PC-3 (cell line): ENCODE measurements at regions of chr16 and their contacts with region 1.

Region 1: DNA sequence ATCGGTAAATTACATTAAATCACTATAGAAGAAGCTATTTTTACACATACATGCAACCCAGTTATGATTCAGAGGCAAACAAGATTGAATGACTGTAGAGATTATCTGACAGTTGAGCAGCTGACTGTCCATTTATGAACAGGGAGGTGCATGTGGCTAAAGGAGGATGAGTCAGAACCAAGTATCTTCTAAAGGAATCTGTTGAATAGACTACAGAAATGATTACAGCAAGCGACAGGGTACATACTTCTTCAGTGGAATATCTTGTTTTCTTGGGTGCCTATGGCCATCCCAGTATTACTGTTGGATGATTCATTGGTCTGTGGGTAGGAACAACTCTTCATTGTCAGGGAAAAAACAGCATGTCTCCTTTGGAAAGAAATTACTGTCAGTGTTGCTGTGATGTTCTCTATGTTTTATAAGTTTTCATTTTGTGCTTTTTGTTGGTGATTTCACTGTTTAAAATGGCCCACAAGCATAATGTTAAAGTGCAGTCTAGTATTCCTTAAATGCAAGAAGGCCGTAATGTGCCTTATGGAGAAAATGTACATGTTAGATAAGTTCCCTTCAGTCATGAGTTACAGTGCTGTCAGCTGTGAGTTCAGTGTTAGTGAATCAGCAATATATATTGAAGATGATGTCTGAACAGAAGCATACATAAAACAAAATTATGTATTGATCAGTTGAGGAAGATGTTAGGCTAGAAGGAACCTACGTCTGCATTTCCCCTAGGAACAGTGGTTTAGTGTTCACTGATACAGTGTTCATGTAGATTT is 27.0 kb downstream of the CBFB start:
- DNase-seq: peak; percentile 89
- ATAC-seq: peak; percentile 97
- H3K4me3 ChIP-seq: peak overlapping the region; percentile 3; the same call in 1 of the 2 replicates
- H3K27ac ChIP-seq: peak overlapping the region; percentile 61
- H3K4me1 ChIP-seq: peaks cover 23% of the 10 kb centered on the region
- H3K27me3 ChIP-seq: no peaks in the 10 kb centered on the region
- CTCF ChIP-seq: no peak

Region 2: GRCh38 chr16:67028555-67029248 is 27.2 kb before region 1 on chr16 and contains the start of gene CBFB:
- CTCF ChIA-PET with region 1: interaction called, 10 read pairs
- POLR2A ChIA-PET with region 1: no interaction called
- intact Hi-C with region 1: no loop called
- DNase-seq: peak; percentile 85
- ATAC-seq: peak; percentile 83
- H3K4me3 ChIP-seq: peak within 1 kb of the TSS; percentile 96
- H3K27ac ChIP-seq: peak within 1 kb of the TSS; percentile 64
- H3K4me1 ChIP-seq: peaks cover 8% of the 10 kb centered on the region
- H3K27me3 ChIP-seq: no peaks in the 10 kb centered on the region
- CTCF ChIP-seq: 0 out of 2 replicates have a peak, but pooled peaks have one; percentile 16
- total RNA-seq, gene CBFB: 50.6 and 103 TPM in 2 replicates

Region 3: DNA sequence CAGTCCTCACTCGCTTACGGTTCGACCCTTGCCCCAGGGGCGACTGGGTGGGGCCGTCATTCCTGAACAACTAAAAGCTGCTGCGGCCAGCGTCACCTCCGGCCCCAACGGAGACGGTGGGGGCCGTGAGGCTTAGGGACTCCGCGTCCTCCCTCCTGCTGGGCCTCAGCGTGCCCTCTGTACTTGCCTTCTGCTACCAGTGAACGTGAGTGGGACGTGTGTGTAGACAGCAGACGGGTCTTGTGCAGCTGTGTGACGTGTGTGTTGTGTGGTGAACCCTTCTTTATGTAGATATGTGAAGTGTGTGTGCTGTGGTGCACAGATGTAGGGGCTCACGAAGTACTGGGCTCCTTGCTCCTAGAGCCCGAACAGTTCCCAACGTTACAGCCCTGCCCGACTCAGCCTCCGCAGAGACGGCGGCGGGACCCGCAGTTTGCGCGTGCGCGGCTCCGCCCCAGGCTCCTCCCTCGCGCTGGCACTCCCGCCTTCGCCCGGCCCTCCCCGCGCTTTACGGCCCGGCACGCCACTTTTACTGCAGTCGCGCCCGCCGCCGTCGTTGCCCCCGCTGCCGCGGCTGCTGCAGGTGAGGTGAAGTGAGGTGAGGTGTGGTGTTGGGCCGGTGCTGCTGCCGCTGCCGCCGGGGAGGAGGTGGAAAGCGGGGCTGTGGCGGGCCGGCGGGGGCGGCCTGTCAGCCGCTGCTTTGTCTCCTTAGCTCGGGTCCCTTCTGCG is 53.7 kb after region 1 on chr16 and contains the start of gene PHAF1:
- CTCF ChIA-PET with region 1: no interaction called
- POLR2A ChIA-PET with region 1: no interaction called
- intact Hi-C with region 1: no loop called
- DNase-seq: peak; percentile 86
- ATAC-seq: peak; percentile 85
- H3K4me3 ChIP-seq: peak within 1 kb of the TSS; percentile 95
- H3K27ac ChIP-seq: peak within 1 kb of the TSS; percentile 14; the same call in 1 of the 2 replicates
- H3K4me1 ChIP-seq: peaks cover 30% of the 10 kb centered on the region
- H3K27me3 ChIP-seq: no peaks in the 10 kb centered on the region
- CTCF ChIP-seq: no peak
- total RNA-seq, gene PHAF1: 12.4 and 18.8 TPM in 2 replicates